ENCODE measurements at regions of chr18 and their contacts with region 1.

Region 1: GRCh38 chr18:74126684-74127482 is 20.8 kb downstream of the FBXO15 start:
- DNase-seq: no peak
- ATAC-seq: peak; percentile 83
- H3K4me3 Mint-ChIP-seq: no peak overlapping the region
- H3K27ac Mint-ChIP-seq: no peak overlapping the region
- H3K4me1 Mint-ChIP-seq: peaks cover 15% of the 10 kb centered on the region
- H3K27me3 Mint-ChIP-seq: no peaks in the 10 kb centered on the region
- CTCF ChIP-seq: no peak

Region 2: GRCh38 chr18:74147779-74148542 is 21.1 kb after region 1 on chr18 and contains the starts of genes FBXO15 and TIMM21:
- CTCF ChIA-PET with region 1: interaction called, 3 read pairs
- POLR2A ChIA-PET with region 1: interaction called, 10 read pairs
- DNase-seq: peak; percentile 92
- ATAC-seq: peak; percentile 95
- H3K4me3 Mint-ChIP-seq: peak within 1 kb of the TSS; percentile 98
- H3K27ac Mint-ChIP-seq: peak within 1 kb of the TSS; percentile 97
- H3K4me1 Mint-ChIP-seq: peaks cover 26% of the 10 kb centered on the region
- H3K27me3 Mint-ChIP-seq: peaks cover 16% of the 10 kb centered on the region
- CTCF ChIP-seq: no peak
- total RNA-seq, gene FBXO15: 0.96 to 1.9 TPM (median 1.6 TPM) in 3 replicates
- total RNA-seq, gene TIMM21: 43.7 to 47.7 TPM (median 45.4 TPM) in 3 replicates